ENCODE measurements at regions of chr19 and their contacts with region 1.

Region 1: DNA sequence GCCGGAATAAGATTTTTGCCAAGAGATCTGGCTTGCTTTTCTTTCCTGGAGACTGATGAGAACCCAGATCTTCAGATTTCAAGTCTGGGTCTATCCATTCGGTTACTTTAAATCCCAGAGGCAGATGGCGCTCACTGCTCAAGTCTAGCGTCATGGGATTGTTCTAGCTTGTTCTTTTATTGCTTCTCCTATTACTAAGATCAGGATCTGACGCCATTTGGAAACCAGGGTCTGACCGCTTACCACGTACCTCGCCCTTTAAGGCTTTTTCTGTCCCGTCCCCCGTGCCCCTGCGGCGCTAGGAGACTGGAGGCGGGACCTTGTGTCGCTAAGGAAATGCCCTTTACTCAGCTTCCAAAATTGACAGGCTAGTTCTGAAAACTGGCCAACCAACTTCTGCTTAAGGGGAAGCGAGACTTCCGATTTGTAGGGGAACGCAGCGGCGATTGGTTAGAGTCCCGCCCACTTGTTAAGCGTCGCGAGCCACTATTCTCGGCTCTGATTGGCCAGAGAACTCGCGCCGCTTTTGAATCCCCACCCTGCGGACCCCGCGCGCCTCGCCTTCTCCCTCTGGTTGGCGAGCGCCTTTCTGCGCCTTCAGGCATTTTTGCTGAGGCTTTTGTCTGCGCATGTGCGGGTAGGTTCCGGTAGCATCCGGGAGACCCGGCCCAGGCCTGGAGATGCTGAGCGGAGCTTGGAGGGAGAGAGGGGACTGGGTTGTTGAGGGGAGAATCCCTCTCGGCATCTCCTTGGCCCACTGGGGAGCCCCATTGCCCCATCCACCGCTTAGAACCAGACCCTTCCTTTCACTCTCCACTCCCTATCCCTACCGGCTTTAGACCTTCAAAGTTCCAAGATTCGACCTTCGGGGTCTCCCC is 3.8 kb upstream of the C19orf84 start:
- DNase-seq: peak; percentile 95
- ATAC-seq: peak; percentile 92
- H3K4me3 ChIP-seq: peak overlapping the region; percentile 43 to 74 (median 62)
- H3K4me3 Mint-ChIP-seq: peak overlapping the region; percentile 85
- H3K27ac ChIP-seq: peak overlapping the region; percentile 63 to 73
- H3K27ac Mint-ChIP-seq: peak overlapping the region; percentile 78
- H3K4me1 ChIP-seq: peaks cover 22 to 33% of the 10 kb centered on the region in 2 donors
- H3K4me1 Mint-ChIP-seq: peaks cover 30% of the 10 kb centered on the region
- H3K27me3 ChIP-seq: peaks cover 0 to 4% (median 0%) of the 10 kb centered on the region in 4 experiments
- H3K27me3 Mint-ChIP-seq: no peaks in the 10 kb centered on the region
- CTCF ChIP-seq: peak; percentile 13

Region 2: DNA sequence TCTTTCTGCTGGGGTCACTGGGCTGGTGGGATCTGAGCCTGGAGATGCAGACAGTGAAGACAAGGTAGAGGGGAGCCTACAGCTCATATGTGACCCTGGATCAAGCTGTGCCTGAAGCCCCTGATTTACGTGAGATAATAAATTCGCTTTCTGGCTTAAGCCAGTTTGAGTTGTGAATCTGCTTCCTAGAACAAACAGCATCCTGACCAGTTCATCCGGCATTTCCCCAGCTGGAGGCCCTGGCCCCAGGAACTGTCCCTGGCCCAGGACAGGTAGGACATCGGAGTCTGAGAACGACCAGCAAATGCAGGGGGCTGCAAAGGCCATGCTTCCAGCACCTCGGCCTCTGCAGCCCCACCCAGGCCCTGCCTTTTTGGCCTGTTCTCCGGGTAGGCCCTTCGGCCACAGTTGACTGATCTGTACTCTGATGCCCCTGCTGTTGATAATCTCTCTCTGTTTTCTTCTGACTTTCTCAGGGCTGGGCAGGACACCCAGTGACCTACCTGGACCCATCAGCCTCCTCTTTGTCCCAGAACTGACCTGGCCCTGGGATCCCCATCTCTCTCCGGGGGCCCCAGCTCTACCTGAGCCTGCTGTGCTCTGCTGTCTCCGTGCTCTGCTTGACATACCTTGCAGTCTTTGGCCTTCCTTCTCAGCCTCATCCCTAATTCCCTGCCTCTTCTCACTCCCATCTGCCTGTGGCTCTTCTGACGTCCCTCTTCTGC is 42.8 kb before region 1 on chr19:
- CTCF ChIA-PET with region 1: no interaction called
- POLR2A ChIA-PET with region 1: no interaction called
- intact Hi-C with region 1: no loop called
- DNase-seq: no peak
- ATAC-seq: no peak
- H3K4me3 ChIP-seq: no peak overlapping the region
- H3K4me3 Mint-ChIP-seq: no peak overlapping the region
- H3K27ac ChIP-seq: no peak overlapping the region
- H3K27ac Mint-ChIP-seq: no peak overlapping the region
- H3K4me1 ChIP-seq: peaks cover 0 to 2% of the 10 kb centered on the region in 2 donors
- H3K4me1 Mint-ChIP-seq: peaks cover 1% of the 10 kb centered on the region
- H3K27me3 ChIP-seq: no peaks in the 10 kb centered on the region
- H3K27me3 Mint-ChIP-seq: no peaks in the 10 kb centered on the region
- CTCF ChIP-seq: no peak

Region 3: GRCh38 chr19:51441410-51442390 is 47.5 kb after region 1 on chr19:
- CTCF ChIA-PET with region 1: interaction called, 98 read pairs
- POLR2A ChIA-PET with region 1: interaction called, 3 read pairs
- intact Hi-C with region 1: loop called (anchors 1 kb)
- DNase-seq: peak; percentile 88
- ATAC-seq: peak; percentile 89
- H3K4me3 ChIP-seq: peak overlapping the region; percentile 5 to 41 (median 37)
- H3K4me3 Mint-ChIP-seq: peak overlapping the region; percentile 71
- H3K27ac ChIP-seq: peak overlapping the region; percentile 61 to 71
- H3K27ac Mint-ChIP-seq: peak overlapping the region; percentile 83
- H3K4me1 ChIP-seq: peaks cover 20 to 32% of the 10 kb centered on the region in 2 donors
- H3K4me1 Mint-ChIP-seq: peaks cover 32% of the 10 kb centered on the region
- H3K27me3 ChIP-seq: peaks cover 0 to 15% (median 3%) of the 10 kb centered on the region in 4 experiments
- H3K27me3 Mint-ChIP-seq: peaks cover 20% of the 10 kb centered on the region
- CTCF ChIP-seq: peak; percentile 22

Measured in B cell (primary cell).